ENCODE measurements at regions of chr7 and their contacts with region 1.

Region 1: DNA sequence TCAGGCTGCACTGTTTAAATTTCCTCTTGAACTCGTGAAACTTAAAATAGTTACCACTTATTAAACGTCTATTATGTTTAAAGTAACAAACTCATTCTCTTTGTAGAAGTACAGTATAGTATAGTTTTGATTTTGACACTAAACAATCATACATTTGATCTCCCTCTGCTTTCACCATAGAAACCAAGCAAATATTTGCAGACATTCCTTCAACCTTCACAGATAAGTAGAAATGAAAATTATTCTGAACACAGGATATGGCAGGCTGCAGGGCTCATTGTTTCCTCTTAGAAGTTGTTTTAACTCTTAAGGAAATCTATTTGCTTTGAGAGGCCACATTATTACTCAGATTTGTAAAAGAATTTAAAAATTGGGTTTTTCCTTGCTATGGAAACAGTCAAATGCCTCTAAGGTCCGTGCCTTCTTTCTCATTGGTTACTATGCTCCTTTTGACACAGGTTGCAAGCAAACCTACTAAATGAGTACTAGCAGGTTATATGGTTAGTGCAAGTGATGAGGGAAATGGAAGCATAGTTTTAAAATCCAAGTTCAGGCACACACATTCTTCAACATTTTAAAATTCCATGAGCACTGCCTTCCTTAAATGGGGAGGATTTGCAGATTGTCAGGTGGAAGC is 92.8 kb upstream of the FAM133B start:
- DNase-seq: no peak
- ATAC-seq: no peak
- H3K4me3 ChIP-seq: no peak overlapping the region
- H3K27ac ChIP-seq: peak overlapping the region in 2 of 10 donors; percentile 16 to 18
- H3K4me1 ChIP-seq: peaks cover 0 to 41% (median 19%) of the 10 kb centered on the region in 9 donors
- H3K27me3 ChIP-seq: no peaks in the 10 kb centered on the region
- CTCF ChIP-seq: no peak

Region 2: DNA sequence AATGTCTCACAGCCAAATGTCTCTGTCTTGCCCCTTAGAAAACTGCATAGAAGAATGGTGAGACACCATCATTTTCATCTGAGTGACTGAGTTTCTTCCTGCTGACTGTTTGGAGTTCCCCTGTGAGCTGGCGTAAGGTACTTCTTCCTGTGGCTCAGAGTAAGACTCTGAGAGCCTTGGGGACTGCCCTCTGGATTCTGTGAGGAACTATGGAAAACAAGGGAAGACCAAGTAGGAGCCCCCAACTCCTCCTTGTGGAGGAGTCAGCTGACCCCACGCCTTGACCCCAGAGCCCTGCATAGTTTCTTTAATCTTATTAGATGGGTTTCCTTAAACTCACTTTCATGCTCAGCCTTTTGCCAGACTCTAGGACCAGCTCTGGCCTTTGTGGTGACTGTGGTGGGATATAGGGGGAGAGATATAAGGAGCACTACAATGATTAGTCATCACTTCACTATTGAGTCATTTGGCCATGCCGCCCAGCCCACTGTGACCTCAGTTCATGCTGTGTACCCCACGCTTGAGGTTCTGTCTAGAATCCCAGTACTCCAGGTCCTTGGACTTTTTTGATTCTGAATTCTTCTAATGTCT is 41.0 kb before region 1 on chr7:
- intact Hi-C with region 1: loop called in 2 of 10 experiments (anchors 5 kb)
- DNase-seq: no peak
- ATAC-seq: no peak
- H3K4me3 ChIP-seq: no peak overlapping the region
- H3K27ac ChIP-seq: peak overlapping the region in 1 of 10 donors; percentile 51
- H3K4me1 ChIP-seq: peaks cover 18 to 72% (median 38%) of the 10 kb centered on the region in 9 donors
- H3K27me3 ChIP-seq: no peaks in the 10 kb centered on the region
- CTCF ChIP-seq: no peak

Region 3: DNA sequence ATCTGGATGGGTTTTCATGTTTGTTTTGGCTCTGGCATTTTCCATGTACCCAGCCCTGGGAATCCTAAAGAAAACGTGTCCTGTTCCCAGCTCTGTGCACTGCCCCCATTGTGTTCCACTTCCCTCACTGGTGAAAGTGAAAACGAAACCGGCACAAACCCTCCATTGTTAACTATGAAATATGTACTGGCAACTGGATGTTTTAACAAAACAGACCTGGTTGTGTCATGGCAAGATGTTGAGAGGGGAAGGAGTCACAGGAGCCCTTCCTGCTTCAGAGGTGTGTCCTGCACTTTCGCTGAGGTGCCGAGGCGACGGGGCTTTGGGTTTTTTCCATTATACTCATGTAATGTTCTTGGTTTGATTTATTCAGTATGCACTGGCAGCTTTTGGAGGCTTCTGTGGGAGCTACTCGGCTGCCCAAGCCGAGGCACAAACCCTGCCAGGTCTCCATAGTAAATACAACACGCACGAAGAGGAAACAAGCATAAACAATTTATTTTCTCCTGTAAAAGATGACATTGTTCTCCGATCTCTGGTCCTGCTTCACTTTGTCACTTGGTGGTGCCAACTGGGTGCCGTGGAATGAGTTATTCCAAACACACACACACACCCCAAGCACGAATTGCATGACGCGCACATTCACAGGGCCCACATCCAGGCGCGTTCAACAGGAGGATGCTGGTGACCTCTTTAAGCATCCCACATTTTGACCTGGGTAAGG is 35.1 kb after region 1 on chr7:
- intact Hi-C with region 1: no loop called
- DNase-seq: peak; percentile 24 to 80
- ATAC-seq: peak; percentile 80 to 95 (median 92)
- H3K4me3 ChIP-seq: peak overlapping the region in 9 of 10 donors; percentile 14 to 57 (median 42)
- H3K27ac ChIP-seq: peak overlapping the region; percentile 78 to 94 (median 88)
- H3K4me1 ChIP-seq: peaks cover under 1 to 54% (median 30%) of the 10 kb centered on the region in 9 donors
- H3K27me3 ChIP-seq: no peaks in the 10 kb centered on the region
- CTCF ChIP-seq: no peak

Region 4: DNA sequence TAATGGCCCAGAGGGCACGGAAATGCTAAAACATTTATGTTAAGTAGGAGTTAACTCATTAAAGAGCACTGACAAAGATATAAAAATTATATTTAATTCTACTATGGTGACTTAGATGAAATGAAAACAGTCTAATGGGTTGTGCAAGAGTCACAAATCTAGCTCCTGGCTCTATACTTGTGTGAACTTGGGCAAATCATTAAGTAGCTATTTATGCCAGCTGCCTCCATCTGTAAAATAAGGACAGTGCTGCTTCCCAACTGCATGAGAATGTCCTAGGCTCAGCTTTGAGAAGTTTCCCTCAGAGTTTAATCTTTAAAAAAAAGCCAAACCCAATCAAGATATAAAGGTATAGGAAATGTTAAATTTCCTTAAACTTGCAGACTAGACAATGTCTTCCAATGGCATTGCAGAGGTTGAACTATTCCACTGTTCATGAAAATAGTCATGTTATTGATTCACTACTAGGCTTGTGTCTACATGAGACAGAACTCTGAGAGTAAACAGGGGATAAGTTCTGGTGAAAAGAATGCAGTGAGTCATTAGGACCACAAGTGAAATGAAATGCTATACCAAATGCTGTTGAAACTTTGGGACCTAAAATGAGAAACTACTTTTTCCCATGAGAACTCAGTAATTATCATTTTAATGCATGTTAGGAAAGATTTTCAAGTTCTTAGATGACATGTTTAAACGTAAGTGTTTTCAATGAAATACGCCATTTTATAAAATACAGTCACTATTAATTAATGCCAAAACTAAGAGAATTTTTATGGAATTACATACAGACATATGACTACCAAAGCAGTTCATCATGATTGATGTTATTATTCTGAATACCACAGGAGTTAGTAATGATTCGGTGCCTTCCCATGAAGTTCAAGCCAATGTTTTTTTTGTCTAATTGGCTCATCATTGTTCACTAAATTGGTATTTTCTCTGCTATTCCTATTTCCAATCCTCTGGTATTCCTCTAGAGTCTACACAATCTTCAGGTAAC is 69.2 kb after region 1 on chr7:
- intact Hi-C with region 1: no loop called
- DNase-seq: no peak
- ATAC-seq: no peak
- H3K4me3 ChIP-seq: no peak overlapping the region
- H3K27ac ChIP-seq: no peak overlapping the region
- H3K4me1 ChIP-seq: peaks cover 0 to 37% (median 22%) of the 10 kb centered on the region in 9 donors
- H3K27me3 ChIP-seq: no peaks in the 10 kb centered on the region
- CTCF ChIP-seq: no peak

Region 5: DNA sequence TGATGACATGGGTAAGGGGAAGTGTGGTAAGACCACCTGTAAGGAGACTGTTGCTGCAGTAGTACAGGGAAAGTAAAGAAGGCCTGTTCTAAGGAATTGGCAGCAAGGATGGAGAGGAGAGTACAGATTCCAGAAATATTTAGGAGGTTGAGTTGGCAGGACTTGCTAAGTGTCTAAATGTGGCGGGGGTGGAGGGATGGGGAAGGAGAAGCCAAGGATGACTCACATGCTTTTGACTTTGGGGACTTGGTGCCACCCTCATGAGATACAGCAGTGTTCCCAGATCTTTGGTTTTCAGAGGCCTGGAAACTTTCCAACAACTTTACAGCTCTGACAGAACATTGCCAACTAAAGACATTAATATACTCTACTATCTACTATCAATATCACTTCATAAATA is 108.0 kb after region 1 on chr7:
- intact Hi-C with region 1: no loop called
- DNase-seq: no peak
- ATAC-seq: peak in 2 of 8 donors; percentile 54 to 85
- H3K4me3 ChIP-seq: no peak overlapping the region
- H3K27ac ChIP-seq: no peak overlapping the region
- H3K4me1 ChIP-seq: peaks cover 0 to 52% (median 40%) of the 10 kb centered on the region in 9 donors
- H3K27me3 ChIP-seq: no peaks in the 10 kb centered on the region
- CTCF ChIP-seq: no peak

Region 6: GRCh38 chr7:93043385-93043985 is 360.5 kb after region 1 on chr7:
- intact Hi-C with region 1: loop called in 1 of 10 experiments (anchors 10 kb)
- DNase-seq: peak in 1 of 2 donors; percentile 24
- ATAC-seq: peak; percentile 8 to 70 (median 42)
- H3K4me3 ChIP-seq: peak overlapping the region in 8 of 10 donors; percentile 16 to 40 (median 31)
- H3K27ac ChIP-seq: no peak overlapping the region
- H3K4me1 ChIP-seq: peaks cover 0 to 5% (median 0%) of the 10 kb centered on the region in 9 donors
- H3K27me3 ChIP-seq: no peaks in the 10 kb centered on the region
- CTCF ChIP-seq: no peak

Region 7: GRCh38 chr7:93212881-93213280 is 529.9 kb after region 1 on chr7:
- intact Hi-C with region 1: no loop called
- DNase-seq: no peak
- ATAC-seq: no peak
- H3K4me3 ChIP-seq: no peak overlapping the region
- H3K27ac ChIP-seq: no peak overlapping the region
- H3K4me1 ChIP-seq: no peaks in the 10 kb centered on the region
- H3K27me3 ChIP-seq: peaks cover 0 to 30% (median 0%) of the 10 kb centered on the region in 7 donors
- CTCF ChIP-seq: no peak